OCI-LY7 (cell line): ENCODE measurements at regions of chr10 and their contacts with region 1.

Region 1: DNA sequence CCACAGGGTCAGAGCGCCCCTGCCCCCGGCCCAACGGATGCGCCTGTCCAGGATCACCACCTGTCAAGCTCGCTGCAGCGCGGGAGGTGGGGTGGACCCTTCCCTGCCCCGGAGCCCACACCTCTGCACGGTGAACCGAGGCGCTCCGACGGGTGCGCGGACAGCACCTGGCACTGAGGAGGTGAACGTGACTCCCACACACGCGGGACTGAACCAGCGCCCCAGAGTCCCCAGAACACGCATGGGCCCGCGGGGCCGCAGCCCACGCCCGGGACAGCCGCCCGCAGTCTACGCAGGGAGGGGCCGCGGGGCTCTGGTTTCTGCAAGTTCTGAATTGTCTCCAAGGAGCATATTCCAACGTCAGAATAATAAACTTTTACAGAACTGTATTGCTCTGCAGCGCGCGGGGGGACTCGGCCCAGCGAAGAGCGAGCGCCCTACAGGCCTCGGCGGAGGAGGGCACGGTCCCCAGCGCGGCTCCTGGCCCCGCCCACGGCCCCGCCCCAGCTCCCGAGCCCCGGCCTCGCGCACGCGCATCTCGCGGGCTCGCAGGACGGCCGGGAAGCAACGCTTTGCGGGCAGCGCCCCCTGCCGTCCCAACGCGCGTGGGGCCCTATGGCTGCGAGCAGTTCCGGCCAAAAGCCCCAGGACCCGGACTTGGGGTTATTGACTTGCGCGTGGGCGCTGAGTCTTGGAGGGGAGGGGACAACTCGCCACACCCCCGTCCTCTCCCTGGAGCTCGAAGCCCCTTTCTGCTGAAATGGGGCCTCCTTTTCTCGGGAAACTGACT is 29.7 kb downstream of the OAT start:
- DNase-seq: peak; percentile 90
- H3K4me3 ChIP-seq: peak overlapping the region; percentile 15
- H3K27ac ChIP-seq: no peak overlapping the region
- H3K4me1 ChIP-seq: peaks cover 5% of the 10 kb centered on the region
- CTCF ChIP-seq: peak; percentile 89

Region 2: DNA sequence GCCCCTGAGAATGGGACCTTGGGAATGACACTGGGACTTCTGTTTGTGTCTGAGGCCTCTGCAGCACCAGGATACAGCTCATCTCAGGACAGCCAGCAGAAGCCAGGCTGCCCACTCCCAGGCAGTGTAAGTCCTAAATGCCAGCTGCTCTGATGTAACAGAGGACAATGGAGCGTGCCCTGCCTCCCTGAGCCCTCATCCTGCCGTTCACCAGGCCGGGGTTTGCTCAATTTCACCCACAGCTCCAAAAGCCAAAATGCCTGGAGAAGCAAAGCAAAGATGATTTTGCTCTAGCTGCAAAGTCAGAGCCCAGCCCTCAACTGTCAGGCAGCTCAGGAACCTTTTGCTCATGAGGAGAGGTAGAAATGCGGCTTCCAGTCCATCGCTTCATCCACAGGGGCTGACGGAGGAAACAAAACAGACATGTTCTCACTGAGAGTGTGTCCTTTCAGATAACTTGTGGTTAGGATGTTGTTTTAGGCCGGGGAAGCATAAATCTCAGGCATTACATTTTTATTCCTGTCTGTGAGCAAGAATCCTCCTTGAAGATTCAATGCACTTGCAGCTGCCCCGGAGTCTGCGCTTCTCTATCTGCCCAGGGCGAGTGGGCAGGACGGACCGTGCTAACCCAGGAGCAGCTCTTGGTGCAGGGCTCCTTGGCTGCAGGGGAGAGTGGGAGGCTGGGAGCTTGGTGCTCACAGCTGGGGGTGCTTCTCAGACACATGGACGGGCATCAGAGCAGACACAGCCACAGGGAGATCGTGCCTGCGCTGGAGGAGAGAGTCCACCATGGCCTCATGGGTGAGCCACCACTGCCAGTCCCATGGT is 212.5 kb before region 1 on chr10:
- CTCF ChIA-PET with region 1: no interaction called
- POLR2A ChIA-PET with region 1: no interaction called
- intact Hi-C with region 1: loop called (anchors 10 kb)
- DNase-seq: no peak
- H3K4me3 ChIP-seq: no peak overlapping the region
- H3K27ac ChIP-seq: no peak overlapping the region
- H3K4me1 ChIP-seq: peaks cover 13% of the 10 kb centered on the region
- CTCF ChIP-seq: no peak

Region 3: DNA sequence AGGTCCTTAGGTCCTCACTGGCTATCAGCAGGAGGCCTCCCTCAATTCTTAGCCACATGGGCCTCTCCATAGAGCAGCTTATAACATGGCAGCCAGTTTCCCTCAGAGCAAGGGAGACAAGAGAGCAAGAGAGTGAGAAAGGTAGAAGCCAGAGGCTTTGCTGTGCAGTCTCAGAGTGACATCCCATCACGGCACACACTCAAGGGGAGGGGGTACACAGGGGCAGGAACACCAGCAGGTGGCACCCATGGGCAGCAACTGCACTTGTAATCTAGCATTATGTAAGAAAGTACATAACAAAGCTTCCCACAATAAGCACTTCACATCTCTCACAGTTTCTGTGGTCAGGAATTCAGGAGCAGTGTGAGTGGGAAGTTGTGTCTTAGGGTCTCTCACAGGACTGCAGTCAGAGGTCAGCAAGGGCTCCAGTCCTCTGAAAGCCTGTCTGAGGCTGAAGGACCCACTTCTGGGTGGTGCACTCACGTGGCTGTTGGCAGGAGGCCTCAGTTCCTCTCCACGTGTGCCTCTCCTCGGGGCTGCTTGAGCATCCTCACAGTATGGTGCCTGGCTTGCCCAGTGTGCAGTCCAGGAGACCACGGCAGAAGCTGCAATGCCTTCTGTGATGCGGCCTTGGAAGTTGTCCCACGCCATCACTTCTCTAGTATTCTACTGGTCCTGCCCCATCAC is 129.7 kb before region 1 on chr10:
- CTCF ChIA-PET with region 1: no interaction called
- POLR2A ChIA-PET with region 1: no interaction called
- intact Hi-C with region 1: loop called (anchors 1 kb)
- DNase-seq: peak; percentile 49
- H3K4me3 ChIP-seq: no peak overlapping the region
- H3K27ac ChIP-seq: no peak overlapping the region
- H3K4me1 ChIP-seq: no peaks in the 10 kb centered on the region
- CTCF ChIP-seq: peak; percentile 73

Region 4: GRCh38 chr10:124340033-124340760 is 48.8 kb before region 1 on chr10:
- CTCF ChIA-PET with region 1: no interaction called
- POLR2A ChIA-PET with region 1: no interaction called
- intact Hi-C with region 1: no loop called
- DNase-seq: no peak
- H3K4me3 ChIP-seq: no peak overlapping the region
- H3K27ac ChIP-seq: no peak overlapping the region
- H3K4me1 ChIP-seq: no peaks in the 10 kb centered on the region
- CTCF ChIP-seq: no peak